ENCODE measurements at regions of chr11 and their contacts with region 1.

Region 1: DNA sequence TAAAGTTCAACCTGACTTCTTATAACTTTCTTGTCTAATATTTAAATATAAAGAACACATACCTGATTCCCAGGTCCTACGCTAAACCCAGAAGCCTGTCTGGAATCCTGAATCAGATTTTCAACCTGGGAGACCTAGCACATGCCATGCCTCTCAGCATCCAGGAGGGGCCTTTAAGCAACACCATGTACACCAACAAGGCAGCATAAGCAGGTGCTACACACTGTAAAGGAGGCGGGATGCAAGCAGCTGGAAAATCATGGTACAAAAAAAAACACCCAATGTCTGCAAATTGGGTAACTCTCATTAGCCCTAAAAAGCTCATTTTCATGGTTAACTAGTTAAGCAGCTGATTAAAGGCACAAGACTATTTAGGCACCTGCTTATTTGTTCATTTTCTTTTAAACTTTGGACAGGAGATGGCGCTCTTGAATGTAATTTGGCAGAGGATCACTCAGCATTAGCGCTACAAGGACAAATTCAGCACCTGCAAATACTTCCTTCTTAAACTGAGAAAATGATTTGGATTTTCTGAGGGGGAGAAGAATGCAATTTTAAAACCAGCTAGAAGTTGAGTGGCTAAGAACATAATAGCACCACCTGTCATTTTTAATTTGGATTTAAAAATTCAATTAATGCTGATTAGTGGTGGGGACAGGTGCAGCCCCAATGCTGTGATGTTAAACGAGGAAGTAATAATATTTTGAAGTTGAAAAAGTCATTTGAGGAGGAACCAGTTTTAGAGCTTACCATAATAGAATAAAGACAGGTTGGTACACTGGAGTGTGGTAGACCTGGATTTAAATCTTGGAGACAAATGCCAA is 104.0 kb downstream of the FAR1 start:
- DNase-seq: peak; percentile 16 to 72
- ATAC-seq: peak; percentile 79 to 88
- H3K4me3 ChIP-seq: no peak overlapping the region
- H3K27ac ChIP-seq: no peak overlapping the region
- H3K4me1 ChIP-seq: no peaks in the 10 kb centered on the region
- CTCF ChIP-seq: peak; percentile 71
- EP300 ChIP-seq: no peak
- POLR2A ChIP-seq: no peak
- RAD21 ChIP-seq: peak; percentile 70 to 76

Region 2: GRCh38 chr11:13761712-13762111 is 10.7 kb before region 1 on chr11:
- CTCF ChIA-PET with region 1: interaction called, 24 read pairs
- POLR2A ChIA-PET with region 1: no interaction called
- DNase-seq: no peak
- ATAC-seq: no peak
- H3K4me3 ChIP-seq: no peak overlapping the region
- H3K27ac ChIP-seq: no peak overlapping the region
- H3K4me1 ChIP-seq: no peaks in the 10 kb centered on the region
- CTCF ChIP-seq: no peak
- EP300 ChIP-seq: no peak
- POLR2A ChIP-seq: no peak
- RAD21 ChIP-seq: no peak

Region 3: GRCh38 chr11:14148653-14149273 is 376.3 kb after region 1 on chr11:
- CTCF ChIA-PET with region 1: interaction called, 20 read pairs
- POLR2A ChIA-PET with region 1: no interaction called
- DNase-seq: peak; percentile 10 to 46
- ATAC-seq: peak; percentile 88 to 93
- H3K4me3 ChIP-seq: no peak overlapping the region
- H3K27ac ChIP-seq: no peak overlapping the region
- H3K4me1 ChIP-seq: no peaks in the 10 kb centered on the region
- CTCF ChIP-seq: peak; percentile 58
- EP300 ChIP-seq: no peak
- POLR2A ChIP-seq: no peak
- RAD21 ChIP-seq: peak; percentile 67 to 68

Region 4: GRCh38 chr11:14249121-14249963 is 476.9 kb after region 1 on chr11:
- CTCF ChIA-PET with region 1: interaction called, 43 read pairs
- POLR2A ChIA-PET with region 1: no interaction called
- DNase-seq: peak; percentile 33 to 57
- ATAC-seq: peak; percentile 63 to 83
- H3K4me3 ChIP-seq: no peak overlapping the region
- H3K27ac ChIP-seq: no peak overlapping the region
- H3K4me1 ChIP-seq: no peaks in the 10 kb centered on the region
- CTCF ChIP-seq: peak; percentile 96
- EP300 ChIP-seq: no peak
- POLR2A ChIP-seq: no peak
- RAD21 ChIP-seq: peak; percentile 95 to 98

Measured in A549 (cell line).